ENCODE measurements at regions of chr12 and their contacts with region 1.

Region 1: GRCh38 chr12:51253276-51253675 is 14.7 kb downstream of the DAZAP2 start:
- H3K4me3 ChIP-seq: no peak overlapping the region
- H3K27ac ChIP-seq: no peak overlapping the region
- H3K4me1 ChIP-seq: no peaks in the 10 kb centered on the region
- CTCF ChIP-seq: no peak

Region 2: DNA sequence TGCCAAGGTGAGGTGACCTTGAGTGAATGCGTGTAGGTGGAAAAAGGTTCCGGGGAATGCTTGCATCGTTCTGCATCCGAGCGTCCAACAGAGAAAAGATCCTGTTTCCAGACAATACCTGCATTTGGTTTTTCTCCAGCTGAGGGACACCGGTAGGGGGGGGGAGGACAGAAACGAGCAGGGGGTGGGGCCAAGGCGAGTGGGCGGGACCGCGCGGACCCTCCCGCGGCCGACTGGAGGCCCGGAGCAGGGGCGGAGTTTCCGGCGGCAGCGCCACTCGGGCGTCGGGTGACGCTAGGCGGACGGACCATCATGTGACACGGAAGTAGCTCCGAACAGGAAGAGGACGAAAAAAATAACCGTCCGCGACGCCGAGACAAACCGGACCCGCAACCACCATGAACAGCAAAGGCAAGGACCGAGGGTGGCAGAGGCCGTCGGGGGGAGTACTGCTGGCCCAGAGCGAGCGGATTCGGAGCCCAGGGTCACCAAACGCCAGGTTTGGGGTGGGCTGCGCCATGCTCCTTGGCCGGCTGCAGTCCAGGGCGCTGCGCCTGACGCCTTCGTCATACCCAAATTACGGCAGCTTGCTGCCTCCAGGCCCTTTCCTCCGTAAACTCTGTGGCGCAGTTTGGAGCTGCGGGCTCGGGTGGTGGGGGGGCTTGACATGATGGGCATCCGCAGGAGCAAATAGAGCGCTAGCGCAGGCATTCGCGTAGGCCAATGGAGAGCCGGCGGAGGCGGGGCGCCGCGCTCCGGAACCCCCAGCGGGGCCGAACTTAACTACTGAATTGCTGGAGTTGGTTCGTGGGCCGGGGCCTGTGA is 14.6 kb before region 1 on chr12 and contains the start of gene DAZAP2:
- CTCF ChIA-PET with region 1: interaction called, 19 read pairs
- POLR2A ChIA-PET with region 1: interaction called, 4 read pairs
- H3K4me3 ChIP-seq: peak within 1 kb of the TSS; percentile 68
- H3K27ac ChIP-seq: peak within 1 kb of the TSS; percentile 91
- H3K4me1 ChIP-seq: peaks cover 4% of the 10 kb centered on the region; the same call in 1 of the 2 replicates
- CTCF ChIP-seq: no peak; the same call in none of the 2 replicates

Region 3: GRCh38 chr12:51270067-51270970 is 17.0 kb after region 1 on chr12 and contains the start of gene SMAGP:
- CTCF ChIA-PET with region 1: interaction called, 10 read pairs
- POLR2A ChIA-PET with region 1: no interaction called
- H3K4me3 ChIP-seq: peak within 1 kb of the TSS; percentile 68
- H3K27ac ChIP-seq: peak within 1 kb of the TSS; percentile 50; the same call in 1 of the 2 replicates
- H3K4me1 ChIP-seq: no peaks in the 10 kb centered on the region
- CTCF ChIP-seq: peak; percentile 69

Measured in HEK293 (cell line).